Posterior vena cava (tissue), 2 donors: ENCODE measurements at regions of chr1 and their contacts with region 1.

Region 1: DNA sequence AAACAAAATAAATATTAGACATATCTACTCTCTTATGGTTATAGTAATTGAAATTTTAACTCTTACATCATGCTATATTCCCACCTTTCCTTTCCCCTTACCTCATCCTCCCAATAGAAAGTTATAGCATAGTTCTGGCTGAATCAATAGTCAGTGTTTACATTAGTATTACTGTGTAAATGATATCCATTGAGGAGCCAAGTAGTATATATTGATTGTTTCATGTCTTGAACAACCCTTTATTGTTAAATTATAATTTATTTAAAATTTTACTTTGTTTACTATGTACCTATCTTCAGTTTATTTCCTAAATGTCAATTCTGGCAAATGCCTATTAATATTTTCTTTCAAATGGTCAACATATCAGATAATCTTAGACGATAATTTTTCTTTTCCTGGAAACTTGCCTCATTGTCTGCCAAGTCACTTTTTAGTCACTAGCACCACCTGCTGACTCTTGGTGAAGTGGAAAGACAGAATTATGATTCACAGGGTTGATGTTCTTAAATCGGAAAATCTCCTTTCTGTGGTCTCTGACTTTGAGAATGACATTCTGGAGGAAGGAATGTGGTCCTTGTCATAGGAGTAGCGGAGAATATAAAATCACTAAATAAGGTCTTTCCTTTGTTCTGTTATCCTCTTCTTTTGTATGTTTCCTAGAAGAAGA is 8.7 kb downstream of the HJV start:
- DNase-seq: no peak

Region 2: DNA sequence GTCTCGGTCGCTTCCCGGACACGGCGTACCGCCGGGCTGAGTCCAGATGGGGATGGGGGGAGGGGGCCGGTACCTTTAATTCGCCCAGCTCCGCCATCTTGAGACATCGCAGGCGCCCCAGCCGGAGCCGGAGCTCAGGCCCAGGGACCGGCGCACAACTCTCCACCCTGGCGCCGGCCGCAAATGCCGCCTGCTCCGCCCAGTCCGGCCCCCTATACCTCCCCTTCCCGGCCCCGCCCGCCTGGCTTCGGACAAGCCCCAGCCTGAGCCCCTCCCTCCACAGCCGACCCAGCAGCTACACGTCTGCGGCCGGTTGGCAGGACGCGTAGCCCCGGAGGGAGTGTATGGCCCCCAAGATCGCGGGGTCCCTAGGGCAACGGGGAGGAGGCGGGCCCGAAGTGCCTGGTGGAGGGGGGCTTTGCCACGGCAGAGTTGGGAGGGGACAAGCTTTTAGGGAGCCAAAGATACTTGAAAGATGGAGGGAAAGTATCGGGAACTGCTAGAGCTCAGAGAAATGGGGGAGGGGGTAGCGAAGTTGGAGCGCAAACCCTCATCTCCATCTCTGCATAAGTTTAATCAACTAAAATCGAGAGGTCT is 153.9 kb before region 1 on chr1 and contains the start of gene PIAS3:
- intact Hi-C with region 1: loop called in 1 of 2 experiments (anchors 10 kb)
- DNase-seq: peak; percentile 98
- total RNA-seq, gene PIAS3: 28.6 to 34.7 TPM

Region 3: GRCh38 chr1:145885738-145886287 is 127.1 kb before region 1 on chr1 and contains the start of gene ANKRD35:
- intact Hi-C with region 1: loop called in 1 of 2 experiments (anchors 10 kb)
- DNase-seq: peak; percentile 95
- total RNA-seq, gene ANKRD35: 5.0 to 7.0 TPM